ENCODE measurements at regions of chr6 and their contacts with region 1.

Region 1: GRCh38 chr6:19851241-19852089 is 14.3 kb downstream of the ID4 start:
- DNase-seq: no peak
- H3K4me3 ChIP-seq: no peak overlapping the region
- H3K27me3 ChIP-seq: no peaks in the 10 kb centered on the region
- CTCF ChIP-seq: peak; percentile 88

Region 2: DNA sequence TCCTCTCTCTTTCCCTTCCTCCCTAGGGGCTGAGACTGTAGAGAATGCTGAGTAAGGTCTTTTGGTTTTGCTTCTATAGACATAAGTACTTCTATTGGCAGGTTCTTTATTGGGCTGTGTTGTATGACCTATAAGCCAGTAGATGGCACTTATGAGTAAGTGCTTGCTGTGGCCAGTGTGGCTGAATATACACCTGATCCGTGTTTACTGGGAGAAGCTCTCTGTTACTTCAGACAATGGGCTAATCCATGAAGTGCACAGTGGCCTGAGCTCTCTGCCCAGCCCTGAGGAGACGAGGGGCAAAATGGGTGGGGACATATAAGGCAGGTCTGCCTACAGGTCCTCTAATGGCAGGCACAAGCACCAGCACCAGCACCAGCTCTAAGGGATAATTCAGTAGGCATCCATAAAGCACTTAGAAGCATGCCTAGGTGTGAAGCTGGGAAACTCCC is 854.1 kb before region 1 on chr6:
- CTCF ChIA-PET with region 1: interaction called, 12 read pairs
- POLR2A ChIA-PET with region 1: no interaction called
- DNase-seq: no peak
- H3K4me3 ChIP-seq: no peak overlapping the region
- H3K27me3 ChIP-seq: no peaks in the 10 kb centered on the region
- CTCF ChIP-seq: peak; percentile 63

Region 3: GRCh38 chr6:19590501-19591131 is 260.8 kb before region 1 on chr6:
- CTCF ChIA-PET with region 1: no interaction called
- POLR2A ChIA-PET with region 1: no interaction called
- DNase-seq: no peak
- H3K4me3 ChIP-seq: no peak overlapping the region
- H3K27me3 ChIP-seq: no peaks in the 10 kb centered on the region
- CTCF ChIP-seq: no peak

Region 4: DNA sequence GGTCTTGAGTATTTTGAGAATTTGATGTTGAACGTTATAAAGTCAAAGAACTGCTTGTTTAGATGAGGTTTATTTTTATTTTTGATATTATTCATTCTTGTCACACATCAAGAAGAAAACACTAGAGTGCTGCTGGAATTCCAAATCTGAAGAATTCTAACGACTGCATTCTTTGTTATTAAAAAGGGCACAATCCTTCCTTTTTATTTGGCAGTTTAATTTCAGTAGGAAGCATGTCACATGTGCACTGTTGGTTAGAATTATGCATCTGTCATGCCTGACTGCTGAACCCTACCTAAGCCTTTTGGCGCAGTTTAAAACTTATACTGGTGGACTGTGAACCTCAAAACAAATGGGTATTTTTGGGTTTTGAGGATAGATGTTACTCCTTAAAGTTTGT is 10.3 kb before region 1 on chr6:
- CTCF ChIA-PET with region 1: interaction called, 11 read pairs
- POLR2A ChIA-PET with region 1: interaction called, 3 read pairs
- DNase-seq: no peak
- H3K4me3 ChIP-seq: no peak overlapping the region
- H3K27me3 ChIP-seq: no peaks in the 10 kb centered on the region
- CTCF ChIP-seq: no peak

Measured in BJ (cell line).